ENCODE measurements at regions of chr12 and their contacts with region 1.

Region 1: DNA sequence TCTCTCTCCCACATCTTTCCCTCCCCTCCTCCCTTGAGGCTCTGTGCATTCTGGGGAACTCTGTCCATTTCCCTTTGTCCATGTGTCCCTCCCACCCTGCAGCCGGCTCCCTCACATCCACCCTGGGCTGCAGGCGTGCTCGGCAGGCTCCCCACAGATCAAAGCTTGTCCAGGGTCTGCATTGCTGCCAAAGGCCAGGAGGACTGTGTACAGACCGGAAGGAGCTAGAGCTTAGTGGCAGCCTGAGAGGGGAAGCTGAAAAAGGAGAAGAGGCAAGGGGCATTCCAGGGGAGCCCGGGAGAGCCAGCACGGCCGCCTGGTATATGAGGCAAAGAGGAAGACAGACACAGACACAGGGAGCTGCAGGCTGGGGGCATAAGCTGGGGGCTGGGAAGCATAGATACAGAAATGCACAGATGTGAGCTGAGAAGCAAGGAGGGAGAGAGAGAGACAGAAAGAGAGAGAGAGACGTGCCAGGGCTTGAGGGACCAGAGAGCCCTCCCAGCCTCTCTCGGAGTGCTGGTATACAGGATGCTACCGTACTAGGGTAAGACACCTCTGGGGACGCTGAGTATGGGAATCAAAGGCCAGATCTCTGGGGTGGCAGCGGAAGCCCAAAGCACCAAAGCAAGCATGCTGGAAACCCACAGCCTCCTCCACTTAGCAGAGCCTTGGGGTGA is 3.3 kb downstream of the CD4 start:
- DNase-seq: peak in 1 of 5 donors; percentile 63
- H3K4me3 ChIP-seq: peak overlapping the region; percentile 42
- H3K4me3 Mint-ChIP-seq: peak overlapping the region in 1 of 7 donors; percentile 68
- H3K27ac ChIP-seq: no peak overlapping the region
- H3K27ac Mint-ChIP-seq: peak overlapping the region in 1 of 8 donors; percentile 44
- H3K4me1 ChIP-seq: peaks cover 19% of the 10 kb centered on the region
- H3K4me1 Mint-ChIP-seq: peaks cover 10 to 18% (median 11%) of the 10 kb centered on the region in 3 donors
- H3K27me3 ChIP-seq: no peaks in the 10 kb centered on the region
- H3K27me3 Mint-ChIP-seq: peaks cover 9 to 26% of the 10 kb centered on the region in 2 donors

Region 2: GRCh38 chr12:6662906-6663742 is 129.5 kb before region 1 on chr12 and contains the start of gene ING4:
- CTCF ChIA-PET with region 1: no interaction called
- POLR2A ChIA-PET with region 1: no interaction called
- DNase-seq: peak; percentile 91 to 99 (median 97)
- H3K4me3 ChIP-seq: peak within 1 kb of the TSS; percentile 76
- H3K4me3 Mint-ChIP-seq: peak within 1 kb of the TSS; percentile 90 to 98 (median 95)
- H3K27ac ChIP-seq: peak within 1 kb of the TSS; percentile 83
- H3K27ac Mint-ChIP-seq: peak within 1 kb of the TSS; percentile 88 to 99 (median 98)
- H3K4me1 ChIP-seq: peaks cover 20% of the 10 kb centered on the region
- H3K4me1 Mint-ChIP-seq: peaks cover 27 to 42% (median 34%) of the 10 kb centered on the region in 3 donors
- H3K27me3 ChIP-seq: no peaks in the 10 kb centered on the region
- H3K27me3 Mint-ChIP-seq: no peaks in the 10 kb centered on the region
- total RNA-seq, gene ING4: 17.4 to 18.5 TPM

Region 3: DNA sequence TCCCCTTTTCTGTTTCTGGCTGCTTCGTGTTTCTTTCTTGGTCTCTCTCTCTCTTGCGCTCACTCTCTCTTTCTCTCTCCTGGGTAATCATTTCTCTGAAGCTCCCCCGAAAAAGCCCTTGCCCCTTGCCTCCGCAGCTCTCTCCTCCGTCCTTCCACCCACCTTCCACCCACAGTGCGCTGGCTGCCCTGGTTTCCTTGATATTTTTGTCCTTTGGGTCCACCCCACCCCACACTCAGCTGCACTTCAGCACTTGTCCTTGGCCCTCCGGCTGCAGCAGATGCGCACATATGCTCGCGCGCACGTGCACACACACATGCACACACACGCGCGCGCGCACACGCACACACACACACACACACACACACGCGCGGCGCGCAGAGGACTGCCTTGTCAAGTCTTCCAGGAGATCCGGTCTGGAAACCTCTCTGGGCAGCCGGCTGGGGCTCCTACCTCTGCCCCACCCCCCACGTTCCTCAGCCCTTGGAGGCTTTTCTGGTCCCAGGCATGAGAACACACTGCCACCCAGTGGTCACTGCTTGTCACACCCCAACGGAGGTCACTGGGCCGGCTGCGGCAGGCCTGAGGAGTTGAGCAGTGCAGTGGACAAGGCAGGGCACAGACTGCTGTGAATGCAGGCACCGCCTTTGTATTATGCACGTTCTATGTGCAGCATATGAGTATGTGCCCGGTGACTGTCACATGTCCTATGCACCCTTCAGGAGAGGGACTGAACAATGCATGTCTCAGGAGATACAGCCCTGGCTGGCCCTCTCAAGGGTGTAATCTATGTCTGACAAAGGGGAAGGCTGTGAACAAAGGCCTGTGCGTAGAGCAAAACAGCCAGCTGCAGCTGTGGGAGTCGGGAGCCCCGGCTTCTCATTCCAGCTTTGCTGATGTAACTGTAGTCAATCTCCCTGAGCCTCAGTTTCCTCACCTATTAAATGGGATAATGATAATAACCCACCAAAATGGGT is 13.8 kb before region 1 on chr12:
- CTCF ChIA-PET with region 1: interaction called, 11 read pairs
- POLR2A ChIA-PET with region 1: no interaction called
- DNase-seq: peak; percentile 81 to 92 (median 85)
- H3K4me3 ChIP-seq: peak overlapping the region; percentile 63
- H3K4me3 Mint-ChIP-seq: peak overlapping the region; percentile 74 to 93 (median 77)
- H3K27ac ChIP-seq: no peak overlapping the region
- H3K27ac Mint-ChIP-seq: peak overlapping the region; percentile 54 to 95 (median 86)
- H3K4me1 ChIP-seq: peaks cover 60% of the 10 kb centered on the region
- H3K4me1 Mint-ChIP-seq: peaks cover 35 to 44% (median 40%) of the 10 kb centered on the region in 3 donors
- H3K27me3 ChIP-seq: no peaks in the 10 kb centered on the region
- H3K27me3 Mint-ChIP-seq: peaks cover 0 to 7% of the 10 kb centered on the region in 2 donors

Region 4: DNA sequence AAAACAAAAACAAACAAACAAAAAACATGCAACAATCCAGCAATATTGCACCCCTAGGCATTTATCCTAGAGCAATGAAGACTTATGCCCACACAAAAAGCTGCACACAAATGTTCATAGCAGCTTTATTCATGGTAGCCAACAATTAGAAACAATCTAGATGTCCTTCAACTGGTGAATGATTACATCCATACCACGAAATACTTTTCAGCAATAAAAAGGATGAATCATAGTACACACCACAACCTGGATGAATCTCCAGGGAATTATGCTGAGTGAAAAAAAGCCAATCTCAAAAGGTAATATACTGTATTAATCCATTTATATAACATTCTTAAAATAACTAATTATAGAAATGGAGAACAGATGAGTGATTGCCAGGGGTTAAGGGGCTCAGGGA is 14.5 kb after region 1 on chr12:
- CTCF ChIA-PET with region 1: no interaction called
- POLR2A ChIA-PET with region 1: no interaction called
- DNase-seq: no peak
- H3K4me3 ChIP-seq: no peak overlapping the region
- H3K4me3 Mint-ChIP-seq: no peak overlapping the region
- H3K27ac ChIP-seq: no peak overlapping the region
- H3K27ac Mint-ChIP-seq: no peak overlapping the region
- H3K4me1 ChIP-seq: no peaks in the 10 kb centered on the region
- H3K4me1 Mint-ChIP-seq: no peaks in the 10 kb centered on the region
- H3K27me3 ChIP-seq: no peaks in the 10 kb centered on the region
- H3K27me3 Mint-ChIP-seq: peaks cover 0 to 3% of the 10 kb centered on the region in 2 donors

Region 5: GRCh38 chr12:6873094-6874014 is 80.7 kb after region 1 on chr12 and contains the start of gene SPSB2:
- CTCF ChIA-PET with region 1: no interaction called
- POLR2A ChIA-PET with region 1: no interaction called
- DNase-seq: peak; percentile 98 to 100 (median 99)
- H3K4me3 ChIP-seq: peak within 1 kb of the TSS; percentile 96
- H3K4me3 Mint-ChIP-seq: peak within 1 kb of the TSS; percentile 83 to 97 (median 89)
- H3K27ac ChIP-seq: peak within 1 kb of the TSS; percentile 90
- H3K27ac Mint-ChIP-seq: peak within 1 kb of the TSS; percentile 85 to 99 (median 92)
- H3K4me1 ChIP-seq: peaks cover 40% of the 10 kb centered on the region
- H3K4me1 Mint-ChIP-seq: peaks cover 41 to 53% (median 52%) of the 10 kb centered on the region in 3 donors
- H3K27me3 ChIP-seq: no peaks in the 10 kb centered on the region
- H3K27me3 Mint-ChIP-seq: no peaks in the 10 kb centered on the region
- total RNA-seq, gene SPSB2: 7.7 to 8.1 TPM